ENCODE measurements at regions of chr3 and their contacts with region 1.

Region 1: GRCh38 chr3:33658991-33659848 is 58.8 kb downstream of the CLASP2 start:
- DNase-seq: peak; percentile 42
- H3K4me3 Mint-ChIP-seq: peak overlapping the region; percentile 44
- H3K27ac Mint-ChIP-seq: peak overlapping the region; percentile 8
- H3K4me1 Mint-ChIP-seq: peaks cover 19% of the 10 kb centered on the region
- H3K27me3 Mint-ChIP-seq: no peaks in the 10 kb centered on the region
- CTCF ChIP-seq: no peak

Region 2: DNA sequence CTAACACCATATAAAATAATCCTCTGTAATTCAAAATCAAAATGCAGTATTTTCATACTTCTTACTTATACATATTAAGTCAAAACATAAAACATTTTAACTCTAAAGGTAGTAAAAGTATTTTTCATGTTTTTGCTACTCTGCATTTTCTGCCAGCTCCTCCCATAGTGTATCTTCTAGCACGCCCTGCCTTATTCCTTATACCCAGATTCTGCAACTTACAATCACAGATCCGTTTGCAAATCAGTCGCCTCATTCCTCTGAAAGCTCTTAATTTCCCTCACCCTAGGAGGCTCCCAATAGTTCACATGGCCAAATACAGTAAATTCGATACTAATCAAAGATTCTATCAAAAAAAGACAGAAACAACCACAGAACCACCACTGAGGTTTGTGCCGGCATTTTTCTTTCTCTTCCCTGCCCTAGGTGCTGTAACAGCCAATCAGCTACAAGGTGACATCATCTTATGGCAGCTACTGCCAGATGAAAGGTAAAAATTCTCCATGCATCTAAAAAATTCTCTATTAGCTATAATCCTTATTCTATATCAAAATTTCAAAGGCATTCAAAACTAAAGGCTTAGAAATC is 14.1 kb before region 1 on chr3:
- CTCF ChIA-PET with region 1: no interaction called
- intact Hi-C with region 1: no loop called
- DNase-seq: no peak
- H3K4me3 Mint-ChIP-seq: no peak overlapping the region
- H3K27ac Mint-ChIP-seq: no peak overlapping the region
- H3K4me1 Mint-ChIP-seq: no peaks in the 10 kb centered on the region
- H3K27me3 Mint-ChIP-seq: no peaks in the 10 kb centered on the region
- CTCF ChIP-seq: no peak

Region 3: GRCh38 chr3:33717866-33718594 is 58.8 kb after region 1 on chr3 and contains the start of gene CLASP2:
- CTCF ChIA-PET with region 1: no interaction called
- intact Hi-C with region 1: loop called (anchors 5 kb)
- DNase-seq: peak; percentile 86
- H3K4me3 Mint-ChIP-seq: no peak within 1 kb of the TSS
- H3K27ac Mint-ChIP-seq: peak within 1 kb of the TSS; percentile 85
- H3K4me1 Mint-ChIP-seq: no peaks in the 10 kb centered on the region
- H3K27me3 Mint-ChIP-seq: no peaks in the 10 kb centered on the region
- CTCF ChIP-seq: no peak
- total RNA-seq, gene CLASP2: 42.4 and 56.4 TPM in 2 replicates

Measured in Calu3 (cell line).